Activated CD4-positive, alpha-beta memory T cell treated with anti-CD3 and anti-CD28 coated beads, Interleukin-2, amount 10 ng/mL, durations not matched to agents 7 days and 5 days (primary cell): ENCODE measurements at regions of chr10 and their contacts with region 1.

Region 1: DNA sequence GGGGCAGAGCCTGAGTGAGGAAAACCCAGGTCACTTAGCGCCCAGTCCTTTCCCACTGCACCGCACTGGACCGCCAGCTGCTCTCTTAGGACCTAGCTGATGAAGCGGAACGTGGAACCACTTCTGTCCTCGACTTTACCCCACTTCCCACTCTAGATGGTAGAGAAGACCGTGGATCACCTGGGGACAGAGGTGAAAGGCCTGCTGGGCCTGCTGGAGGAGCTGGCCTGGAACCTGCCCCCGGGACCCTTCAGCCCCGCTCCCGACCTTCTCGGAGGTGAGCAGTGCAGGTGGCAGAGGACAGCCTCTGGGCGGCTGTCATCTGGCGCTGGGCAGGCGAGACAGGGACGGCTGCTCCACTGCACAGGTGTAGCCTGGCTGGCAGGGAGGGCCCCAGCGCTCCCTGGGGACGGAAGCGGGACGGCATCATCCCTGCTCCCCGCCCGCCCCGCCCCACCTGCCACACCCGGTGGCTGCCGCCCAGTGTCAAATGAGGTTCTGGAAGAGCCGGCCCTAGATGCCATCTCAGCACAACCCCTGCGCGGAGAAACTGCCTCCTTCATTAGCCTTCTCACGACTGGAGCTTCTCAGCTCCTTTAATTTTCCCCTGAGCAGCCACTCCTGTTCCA is 11.7 kb downstream of the PLAC9 start:
- DNase-seq: peak; percentile 49
- H3K4me3 Mint-ChIP-seq: peak overlapping the region; percentile 72
- H3K27ac Mint-ChIP-seq: peak overlapping the region; percentile 76
- H3K4me1 Mint-ChIP-seq: peaks cover 22% of the 10 kb centered on the region
- H3K27me3 Mint-ChIP-seq: peaks cover 19% of the 10 kb centered on the region

Region 2: DNA sequence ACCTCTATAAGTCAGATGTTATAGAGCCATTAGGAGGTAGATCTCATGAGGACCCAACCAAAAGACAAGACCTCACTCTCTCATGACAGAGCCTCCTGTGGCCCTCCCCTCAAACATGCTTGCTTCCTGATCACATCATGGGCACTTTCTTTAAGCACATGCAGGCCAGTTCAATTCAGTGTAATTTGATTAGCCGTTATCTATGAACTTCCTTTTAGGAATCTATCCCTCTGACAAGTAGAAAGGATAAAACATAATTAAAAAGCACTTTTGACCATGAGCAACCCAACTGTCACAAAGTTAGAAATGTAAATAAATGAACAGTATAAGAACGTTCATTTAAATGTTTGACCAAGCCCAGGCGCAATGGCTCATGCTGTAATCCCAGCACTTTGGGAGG is 93.4 kb before region 1 on chr10:
- CTCF ChIA-PET with region 1: no interaction called
- POLR2A ChIA-PET with region 1: no interaction called
- DNase-seq: no peak
- H3K4me3 Mint-ChIP-seq: no peak overlapping the region
- H3K27ac Mint-ChIP-seq: no peak overlapping the region
- H3K4me1 Mint-ChIP-seq: no peaks in the 10 kb centered on the region
- H3K27me3 Mint-ChIP-seq: peaks cover 3% of the 10 kb centered on the region

Region 3: GRCh38 chr10:80187465-80188409 is 43.6 kb after region 1 on chr10:
- CTCF ChIA-PET with region 1: interaction called, 15 read pairs
- POLR2A ChIA-PET with region 1: interaction called, 11 read pairs
- DNase-seq: peak; percentile 88
- H3K4me3 Mint-ChIP-seq: peak overlapping the region; percentile 67
- H3K27ac Mint-ChIP-seq: peak overlapping the region; percentile 95
- H3K4me1 Mint-ChIP-seq: peaks cover 73% of the 10 kb centered on the region
- H3K27me3 Mint-ChIP-seq: no peaks in the 10 kb centered on the region

Region 4: GRCh38 chr10:80205478-80206276 is 61.5 kb after region 1 on chr10 and contains the start of gene ANXA11:
- CTCF ChIA-PET with region 1: interaction called, 35 read pairs
- POLR2A ChIA-PET with region 1: interaction called, 13 read pairs
- DNase-seq: peak; percentile 88
- H3K4me3 Mint-ChIP-seq: peak within 1 kb of the TSS; percentile 81
- H3K27ac Mint-ChIP-seq: peak within 1 kb of the TSS; percentile 90
- H3K4me1 Mint-ChIP-seq: peaks cover 43% of the 10 kb centered on the region
- H3K27me3 Mint-ChIP-seq: no peaks in the 10 kb centered on the region
- total RNA-seq, gene ANXA11: 271 to 273 TPM

Region 5: DNA sequence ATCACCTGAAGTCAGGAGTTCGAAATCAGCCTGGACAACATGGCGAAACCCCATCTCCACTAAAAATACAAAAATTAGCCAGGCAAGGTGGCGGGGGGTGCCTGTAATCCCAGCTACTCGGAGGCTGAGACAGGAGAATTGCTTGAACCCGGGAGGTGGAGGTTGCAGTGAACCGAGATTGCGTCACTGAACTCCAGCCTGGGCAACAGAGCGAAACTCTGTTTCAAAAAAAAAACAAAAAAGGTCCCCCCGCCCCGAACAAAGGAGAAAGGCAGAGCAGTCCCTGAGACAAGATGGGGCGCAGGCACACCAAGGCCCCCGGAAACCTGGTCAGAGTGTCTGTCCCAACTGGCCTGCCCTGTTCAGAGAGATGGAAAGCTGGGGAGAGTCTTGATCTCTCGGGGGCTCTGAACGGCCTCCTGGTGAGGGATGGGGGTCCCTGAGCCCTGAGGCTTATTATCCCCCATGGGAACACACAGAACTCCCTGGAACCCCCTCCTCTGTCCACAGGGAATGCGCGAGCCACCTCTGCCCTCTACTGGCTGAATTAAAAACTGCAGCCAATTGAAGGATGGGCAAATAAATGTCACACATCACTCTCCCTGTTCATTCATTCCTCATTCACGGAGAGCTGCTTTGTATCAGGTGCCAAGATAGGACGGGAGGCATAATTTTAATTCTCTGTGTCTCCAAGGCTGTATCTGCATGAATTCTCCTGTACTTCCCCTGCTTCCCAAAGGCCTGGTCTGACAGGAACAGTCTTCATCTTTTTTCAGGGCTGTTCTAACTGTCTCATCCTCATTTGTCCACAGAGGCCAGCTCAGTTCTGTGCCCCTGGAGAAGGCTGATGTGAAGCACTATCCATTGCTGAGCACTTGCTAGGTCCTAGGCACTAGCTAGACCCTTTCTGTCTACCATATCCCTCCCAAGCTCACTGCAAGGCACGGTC is 116.4 kb after region 1 on chr10:
- CTCF ChIA-PET with region 1: interaction called, 11 read pairs
- POLR2A ChIA-PET with region 1: interaction called, 3 read pairs
- DNase-seq: peak; percentile 41
- H3K4me3 Mint-ChIP-seq: no peak overlapping the region
- H3K27ac Mint-ChIP-seq: no peak overlapping the region
- H3K4me1 Mint-ChIP-seq: no peaks in the 10 kb centered on the region
- H3K27me3 Mint-ChIP-seq: peaks cover 13% of the 10 kb centered on the region